Activated T-helper 1 cell treated with anti-CD3 and anti-CD28 coated beads, Interleukin-12 subunit alpha, Interleukin-12 subunit beta, Interleukin-2, Interleukin-4 antibody, amounts not matched to agents 30 ng/mL and 10 ng/mL and 1 ng/mL, durations not matched to agents 14 hours and 24 hours and 36 hours (primary cell): ENCODE measurements at regions of chr12 and their contacts with region 1.

Region 1: GRCh38 chr12:7018350-7019042 is at the start of gene LPCAT3:
- DNase-seq: peak; percentile 98
- H3K4me3 Mint-ChIP-seq: peak within 1 kb of the TSS; percentile 93
- H3K27ac Mint-ChIP-seq: peak within 1 kb of the TSS; percentile 95
- H3K4me1 Mint-ChIP-seq: peaks cover 36% of the 10 kb centered on the region
- H3K27me3 Mint-ChIP-seq: no peaks in the 10 kb centered on the region
- total RNA-seq, gene LPCAT3: 27.9 and 30.0 TPM in 2 replicates

Region 2: DNA sequence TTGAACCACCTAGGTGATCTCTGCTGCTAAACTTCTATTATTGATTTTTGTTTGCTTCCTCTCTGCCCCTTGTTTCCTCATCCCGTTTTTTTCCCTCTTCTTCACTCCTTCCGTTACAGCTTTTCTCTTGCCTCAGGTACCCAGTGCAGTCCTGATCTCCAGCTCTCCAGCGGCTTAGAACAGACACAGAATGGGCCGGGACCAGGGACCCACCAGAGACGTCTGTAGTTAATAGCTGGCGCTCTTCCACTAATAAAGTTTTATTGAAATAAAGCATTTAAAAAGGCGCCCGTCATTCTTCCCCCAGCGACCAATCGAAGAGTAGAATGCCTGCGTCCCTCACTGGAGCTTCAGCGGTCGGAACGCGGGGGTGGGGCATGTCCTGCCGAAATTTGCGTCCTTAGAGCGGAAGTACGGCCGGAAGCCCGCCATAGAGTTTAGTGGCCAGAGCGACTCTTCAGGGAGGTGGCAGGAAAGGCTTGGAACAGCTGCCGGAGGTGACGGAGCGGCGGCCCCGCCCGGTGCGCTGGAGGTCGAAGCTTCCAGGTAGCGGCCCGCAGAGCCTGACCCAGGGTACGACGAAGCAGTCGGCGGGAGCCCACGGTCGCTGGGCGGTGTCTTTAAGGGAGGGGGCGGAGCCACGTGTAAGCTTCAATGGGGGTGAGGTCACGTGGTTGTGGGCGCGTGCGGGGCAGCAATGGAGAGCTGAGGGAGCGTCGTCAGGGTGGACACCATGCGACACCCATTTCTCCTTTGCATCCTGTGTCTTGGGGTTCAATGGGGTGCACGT is 294.7 kb before region 1 on chr12 and contains the start of gene COPS7A:
- intact Hi-C with region 1: loop called (anchors 1 kb)
- DNase-seq: peak; percentile 98
- H3K4me3 Mint-ChIP-seq: peak within 1 kb of the TSS; percentile 92
- H3K27ac Mint-ChIP-seq: peak within 1 kb of the TSS; percentile 91
- H3K4me1 Mint-ChIP-seq: peaks cover 33% of the 10 kb centered on the region
- H3K27me3 Mint-ChIP-seq: no peaks in the 10 kb centered on the region
- total RNA-seq, gene COPS7A: 34.6 and 36.2 TPM in 2 replicates

Region 3: GRCh38 chr12:6873094-6874014 is 145.1 kb before region 1 on chr12 and contains the start of gene SPSB2:
- intact Hi-C with region 1: loop called (anchors 1 kb)
- DNase-seq: peak; percentile 99
- H3K4me3 Mint-ChIP-seq: peak within 1 kb of the TSS; percentile 96
- H3K27ac Mint-ChIP-seq: peak within 1 kb of the TSS; percentile 86
- H3K4me1 Mint-ChIP-seq: peaks cover 56% of the 10 kb centered on the region
- H3K27me3 Mint-ChIP-seq: no peaks in the 10 kb centered on the region
- total RNA-seq, gene SPSB2: 3.4 and 4.7 TPM in 2 replicates

Region 4: GRCh38 chr12:6925540-6926279 is 92.8 kb before region 1 on chr12:
- intact Hi-C with region 1: loop called (anchors 1 kb)
- DNase-seq: no peak
- H3K4me3 Mint-ChIP-seq: peak overlapping the region; percentile 91
- H3K27ac Mint-ChIP-seq: peak overlapping the region; percentile 94
- H3K4me1 Mint-ChIP-seq: peaks cover 44% of the 10 kb centered on the region
- H3K27me3 Mint-ChIP-seq: peaks cover 3% of the 10 kb centered on the region

Region 5: GRCh38 chr12:6953442-6954315 is 64.8 kb before region 1 on chr12:
- intact Hi-C with region 1: no loop called
- DNase-seq: peak; percentile 79
- H3K4me3 Mint-ChIP-seq: peak overlapping the region; percentile 98
- H3K27ac Mint-ChIP-seq: peak overlapping the region; percentile 97
- H3K4me1 Mint-ChIP-seq: peaks cover 80% of the 10 kb centered on the region
- H3K27me3 Mint-ChIP-seq: no peaks in the 10 kb centered on the region

Region 6: GRCh38 chr12:6965026-6965661 is 53.4 kb before region 1 on chr12:
- intact Hi-C with region 1: loop called (anchors 1 kb)
- DNase-seq: peak; percentile 78
- H3K4me3 Mint-ChIP-seq: no peak overlapping the region
- H3K27ac Mint-ChIP-seq: peak overlapping the region; percentile 90
- H3K4me1 Mint-ChIP-seq: peaks cover 59% of the 10 kb centered on the region
- H3K27me3 Mint-ChIP-seq: no peaks in the 10 kb centered on the region

Region 7: GRCh38 chr12:7092229-7092985 is 73.9 kb after region 1 on chr12 and contains the start of gene C1R:
- intact Hi-C with region 1: loop called (anchors 2 kb)
- DNase-seq: peak; percentile 51
- H3K4me3 Mint-ChIP-seq: peak within 1 kb of the TSS; percentile 80
- H3K27ac Mint-ChIP-seq: peak within 1 kb of the TSS; percentile 0
- H3K4me1 Mint-ChIP-seq: peaks cover 8% of the 10 kb centered on the region
- H3K27me3 Mint-ChIP-seq: peaks cover 6% of the 10 kb centered on the region
- total RNA-seq, gene C1R: 1.7 and 2.0 TPM in 2 replicates

Region 8: DNA sequence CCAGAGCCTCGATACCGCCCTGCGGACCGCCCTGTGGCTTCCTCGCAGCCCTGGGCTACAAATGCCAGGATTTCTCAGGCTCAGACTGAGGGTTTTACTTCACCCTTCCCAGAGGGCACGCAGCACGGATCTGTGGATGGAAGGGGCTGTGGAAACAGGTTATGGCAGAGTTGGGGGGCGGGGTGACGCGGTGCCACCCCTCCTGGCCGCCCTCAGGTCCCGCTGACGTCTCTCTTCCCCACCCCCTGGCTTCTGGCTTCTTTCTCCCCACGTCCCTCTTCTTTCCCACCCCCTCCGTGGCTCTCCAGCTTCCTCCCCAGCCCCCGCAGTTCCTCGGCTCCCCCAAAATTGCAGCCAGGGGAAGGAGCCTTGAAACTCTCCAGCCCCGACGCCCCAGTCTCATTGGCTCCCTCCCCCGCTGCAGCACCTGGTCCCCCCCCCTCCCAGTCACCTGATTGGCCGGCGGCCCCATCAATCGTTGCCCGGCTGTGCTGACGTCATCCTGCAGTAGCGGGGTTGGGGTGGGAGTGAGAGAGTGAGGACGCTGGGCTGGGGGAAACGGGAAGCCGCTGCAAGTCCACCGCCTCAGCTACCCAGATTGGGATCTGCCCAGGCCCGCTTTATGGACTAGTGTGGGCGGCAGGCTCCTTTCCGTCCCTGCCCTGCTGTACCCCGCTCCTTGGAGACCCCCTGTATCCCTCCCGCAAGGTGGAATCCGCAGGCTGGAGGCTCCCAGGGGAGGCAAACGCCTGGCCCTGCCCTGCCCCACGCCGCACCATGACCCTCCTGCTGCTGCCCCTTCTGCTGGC is 111.6 kb after region 1 on chr12 and contains the start of gene CLSTN3:
- intact Hi-C with region 1: loop called (anchors 1 kb)
- DNase-seq: peak; percentile 84
- H3K4me3 Mint-ChIP-seq: peak within 1 kb of the TSS; percentile 96
- H3K27ac Mint-ChIP-seq: peak within 1 kb of the TSS; percentile 91
- H3K4me1 Mint-ChIP-seq: peaks cover 37% of the 10 kb centered on the region
- H3K27me3 Mint-ChIP-seq: no peaks in the 10 kb centered on the region
- total RNA-seq, gene CLSTN3: 48.5 and 50.8 TPM in 2 replicates